GM12878 (cell line): ENCODE measurements at regions of chr22 and their contacts with region 1.

Region 1: GRCh38 chr22:21760640-21761039 is 25.0 kb upstream of the YPEL1 start:
- DNase-seq: no peak
- ATAC-seq: peak; percentile 14
- H3K4me3 ChIP-seq: no peak overlapping the region
- H3K27ac ChIP-seq: no peak overlapping the region
- H3K4me1 ChIP-seq: peaks cover 55% of the 10 kb centered on the region
- H3K27me3 ChIP-seq: no peaks in the 10 kb centered on the region
- CTCF ChIP-seq: no peak
- EP300 ChIP-seq: no peak; a peak in 1 of 4 replicates
- POLR2A ChIP-seq: no peak
- RAD21 ChIP-seq: no peak

Region 2: DNA sequence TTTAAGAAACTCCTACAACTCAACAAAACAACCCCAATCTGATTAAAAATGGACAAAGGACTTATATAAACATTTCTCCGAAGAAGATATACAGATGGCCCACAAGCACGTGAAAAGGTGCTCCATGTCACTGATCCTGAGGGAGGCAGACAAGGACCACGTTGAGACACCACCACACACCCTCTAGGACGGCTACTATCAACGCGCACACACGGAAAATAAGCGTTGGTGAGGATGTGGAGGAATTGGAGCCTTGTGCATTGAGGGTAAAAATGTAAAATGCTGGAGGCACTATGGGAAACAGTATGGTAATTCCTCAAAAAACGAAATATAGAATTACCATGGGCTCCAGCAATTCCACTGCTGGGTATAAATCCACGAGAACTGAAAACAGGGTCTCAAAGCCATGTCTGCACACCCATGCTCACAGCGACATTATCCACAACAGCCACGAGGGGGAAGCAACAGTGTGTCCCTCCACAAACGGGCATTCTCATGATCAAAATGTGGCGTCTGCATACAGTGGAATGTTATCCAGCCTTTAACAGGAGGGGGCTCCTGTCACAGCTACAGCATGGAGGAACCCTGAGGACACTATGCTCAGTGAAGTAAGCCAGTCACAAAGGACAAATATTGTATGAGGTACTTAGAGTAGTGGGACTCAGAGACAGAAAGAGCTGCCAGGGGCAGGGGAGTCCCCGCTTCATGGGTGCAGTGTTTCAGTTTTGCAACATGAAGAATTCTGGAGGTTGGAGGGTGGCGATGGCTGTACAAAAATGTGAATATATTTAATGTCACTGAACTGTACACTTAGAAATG is 47.5 kb before region 1 on chr22:
- CTCF ChIA-PET with region 1: interaction called, 12 read pairs
- POLR2A ChIA-PET with region 1: no interaction called
- RAD21 ChIA-PET with region 1: interaction called, 13 read pairs
- SMC1A ChIA-PET with region 1: interaction called, 4 read pairs
- in situ Hi-C with region 1: no loop called
- intact Hi-C with region 1: no loop called
- DNase-seq: peak; percentile 25
- ATAC-seq: peak; percentile 97
- H3K4me3 ChIP-seq: no peak overlapping the region
- H3K27ac ChIP-seq: no peak overlapping the region
- H3K4me1 ChIP-seq: no peaks in the 10 kb centered on the region
- H3K27me3 ChIP-seq: no peaks in the 10 kb centered on the region
- CTCF ChIP-seq: peak; percentile 79 to 91 (median 84)
- EP300 ChIP-seq: no peak
- POLR2A ChIP-seq: no peak
- RAD21 ChIP-seq: peak; percentile 93

Region 3: GRCh38 chr22:21771631-21771976 is 11.0 kb after region 1 on chr22:
- CTCF ChIA-PET with region 1: interaction called, 8 read pairs
- POLR2A ChIA-PET with region 1: interaction called, 3 read pairs
- RAD21 ChIA-PET with region 1: interaction called, 7 read pairs
- SMC1A ChIA-PET with region 1: interaction called, 26 read pairs
- in situ Hi-C with region 1: no loop called
- intact Hi-C with region 1: no loop called
- DNase-seq: no peak
- ATAC-seq: no peak
- H3K4me3 ChIP-seq: no peak overlapping the region
- H3K27ac ChIP-seq: no peak overlapping the region
- H3K4me1 ChIP-seq: peaks cover 15% of the 10 kb centered on the region
- H3K27me3 ChIP-seq: no peaks in the 10 kb centered on the region
- CTCF ChIP-seq: no peak
- EP300 ChIP-seq: no peak
- POLR2A ChIP-seq: no peak
- RAD21 ChIP-seq: no peak

Region 4: GRCh38 chr22:21791635-21792625 is 31.3 kb after region 1 on chr22:
- CTCF ChIA-PET with region 1: no interaction called
- POLR2A ChIA-PET with region 1: no interaction called
- RAD21 ChIA-PET with region 1: interaction called, 3 read pairs
- SMC1A ChIA-PET with region 1: interaction called, 15 read pairs
- in situ Hi-C with region 1: no loop called
- intact Hi-C with region 1: no loop called
- DNase-seq: peak; percentile 62
- ATAC-seq: peak; percentile 96
- H3K4me3 ChIP-seq: no peak overlapping the region
- H3K27ac ChIP-seq: no peak overlapping the region
- H3K4me1 ChIP-seq: peaks cover 8% of the 10 kb centered on the region
- H3K27me3 ChIP-seq: no peaks in the 10 kb centered on the region
- CTCF ChIP-seq: 0 out of 6 replicates have a peak, but pooled peaks of 2 of the 3 experiments have one; percentile 7
- EP300 ChIP-seq: peak in 1 of 2 experiments; percentile 43; a peak in 1 of 4 replicates
- POLR2A ChIP-seq: no peak
- RAD21 ChIP-seq: 0 out of 2 replicates have a peak, but pooled peaks have one; percentile 1

Region 5: DNA sequence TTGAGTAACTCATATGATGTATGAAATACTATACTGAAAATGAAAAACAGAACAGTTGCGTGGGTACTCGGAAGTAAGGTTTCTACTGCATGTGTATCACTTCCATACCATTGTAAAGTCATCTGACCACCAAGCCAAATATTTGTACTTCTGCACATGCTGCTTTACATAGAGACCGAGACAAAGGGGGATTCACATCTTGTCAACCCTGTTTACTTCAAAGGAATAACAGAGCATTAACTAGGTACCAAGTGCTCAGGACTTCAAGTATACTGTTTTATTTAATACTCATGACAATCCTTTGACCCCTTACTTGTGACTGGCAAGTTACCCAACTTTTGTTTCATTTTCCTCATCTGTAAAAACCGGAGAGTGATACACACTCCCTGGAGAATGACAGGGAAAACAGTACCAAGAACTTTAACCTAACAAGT is 96.9 kb after region 1 on chr22:
- CTCF ChIA-PET with region 1: interaction called, 5 read pairs
- POLR2A ChIA-PET with region 1: interaction called, 3 read pairs
- RAD21 ChIA-PET with region 1: interaction called, 6 read pairs
- SMC1A ChIA-PET with region 1: interaction called, 10 read pairs
- in situ Hi-C with region 1: no loop called
- intact Hi-C with region 1: loop called (anchors 5 kb)
- DNase-seq: peak; percentile 45
- ATAC-seq: peak; percentile 91
- H3K4me3 ChIP-seq: peak overlapping the region; percentile 41; the same call in 1 of the 2 replicates
- H3K27ac ChIP-seq: peak overlapping the region; percentile 27; the same call in 1 of the 2 replicates
- H3K4me1 ChIP-seq: peaks cover 18% of the 10 kb centered on the region
- H3K27me3 ChIP-seq: no peaks in the 10 kb centered on the region
- CTCF ChIP-seq: no peak
- EP300 ChIP-seq: peak; percentile 49 to 63; a peak in 2 of 4 replicates
- POLR2A ChIP-seq: no peak
- RAD21 ChIP-seq: no peak

Region 6: GRCh38 chr22:21867528-21868266 is 107.1 kb after region 1 on chr22 and contains the start of gene MAPK1:
- CTCF ChIA-PET with region 1: interaction called, 7 read pairs
- POLR2A ChIA-PET with region 1: interaction called, 4 read pairs
- RAD21 ChIA-PET with region 1: interaction called, 18 read pairs
- SMC1A ChIA-PET with region 1: interaction called, 9 read pairs
- in situ Hi-C with region 1: no loop called
- intact Hi-C with region 1: loop called (anchors 5 kb)
- DNase-seq: peak; percentile 97
- ATAC-seq: peak; percentile 93
- H3K4me3 ChIP-seq: peak within 1 kb of the TSS; percentile 70
- H3K27ac ChIP-seq: peak within 1 kb of the TSS; percentile 97
- H3K4me1 ChIP-seq: peaks cover 12% of the 10 kb centered on the region
- H3K27me3 ChIP-seq: no peaks in the 10 kb centered on the region
- CTCF ChIP-seq: peak in 2 of 3 experiments; percentile 16 to 20; a peak in 4 of 6 replicates
- EP300 ChIP-seq: peak; percentile 76 to 78; a peak in 3 of 4 replicates
- POLR2A ChIP-seq: peak; percentile 96
- RAD21 ChIP-seq: no peak
- polyA plus RNA-seq, gene MAPK1: 12.1 to 19.3 TPM